ENCODE measurements at regions of chr7 and their contacts with region 1.

Region 1: DNA sequence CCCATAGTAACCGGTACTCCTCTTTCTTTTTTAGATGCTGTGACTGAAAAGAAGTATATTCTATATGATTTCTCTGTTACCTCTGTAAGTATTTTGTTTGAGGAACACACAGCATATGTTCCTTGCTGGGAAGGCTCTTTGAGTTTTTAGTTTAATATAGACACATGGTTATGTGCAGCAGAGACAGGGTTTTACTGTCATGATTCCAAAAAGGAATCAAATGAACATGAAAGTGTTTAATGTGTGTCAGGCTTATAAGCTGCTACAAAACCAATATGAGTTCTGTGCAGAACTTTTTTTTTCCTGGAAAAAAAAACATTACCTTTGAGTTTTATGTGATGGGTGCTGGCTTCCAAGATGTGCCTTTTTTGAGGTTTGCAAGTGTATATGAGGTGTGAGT is 50.4 kb downstream of the MGAM2 start:
- DNase-seq: no peak
- H3K4me3 ChIP-seq: no peak overlapping the region
- CTCF ChIP-seq: no peak
- POLR2A ChIP-seq: no peak

Region 2: GRCh38 chr7:142111499-142111898 is 50.4 kb before region 1 on chr7 and contains the start of gene MGAM2:
- intact Hi-C with region 1: loop called (anchors 5 kb)
- DNase-seq: no peak
- H3K4me3 ChIP-seq: no peak within 1 kb of the TSS
- CTCF ChIP-seq: no peak
- POLR2A ChIP-seq: no peak
- total RNA-seq, gene MGAM2: 0.29 to 0.39 TPM in 2 of 4 donors, not detected in the others